ENCODE measurements at regions of chr10 and their contacts with region 1.

Region 1: DNA sequence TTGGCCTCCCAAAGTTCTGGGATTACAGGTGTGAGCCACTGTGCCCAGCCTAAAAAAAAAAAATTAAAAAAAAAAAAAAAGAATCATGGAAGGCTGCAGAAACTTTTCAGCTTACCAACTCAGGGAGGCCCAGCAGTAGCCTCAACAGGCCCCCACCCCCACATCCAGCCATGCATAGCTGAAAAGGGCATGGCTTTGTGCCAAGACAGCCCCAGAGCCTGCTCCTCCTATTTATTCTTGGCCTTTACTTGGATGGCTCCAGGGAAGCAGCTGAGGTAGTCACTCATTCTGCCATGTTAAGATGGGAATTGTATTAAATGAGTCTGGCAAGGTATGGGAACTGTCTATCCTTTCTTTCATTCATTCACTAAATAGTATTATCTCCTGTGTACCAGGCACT is 13.7 kb upstream of the CNNM2 start:
- DNase-seq: peak; percentile 31
- ATAC-seq: peak; percentile 33

Region 2: DNA sequence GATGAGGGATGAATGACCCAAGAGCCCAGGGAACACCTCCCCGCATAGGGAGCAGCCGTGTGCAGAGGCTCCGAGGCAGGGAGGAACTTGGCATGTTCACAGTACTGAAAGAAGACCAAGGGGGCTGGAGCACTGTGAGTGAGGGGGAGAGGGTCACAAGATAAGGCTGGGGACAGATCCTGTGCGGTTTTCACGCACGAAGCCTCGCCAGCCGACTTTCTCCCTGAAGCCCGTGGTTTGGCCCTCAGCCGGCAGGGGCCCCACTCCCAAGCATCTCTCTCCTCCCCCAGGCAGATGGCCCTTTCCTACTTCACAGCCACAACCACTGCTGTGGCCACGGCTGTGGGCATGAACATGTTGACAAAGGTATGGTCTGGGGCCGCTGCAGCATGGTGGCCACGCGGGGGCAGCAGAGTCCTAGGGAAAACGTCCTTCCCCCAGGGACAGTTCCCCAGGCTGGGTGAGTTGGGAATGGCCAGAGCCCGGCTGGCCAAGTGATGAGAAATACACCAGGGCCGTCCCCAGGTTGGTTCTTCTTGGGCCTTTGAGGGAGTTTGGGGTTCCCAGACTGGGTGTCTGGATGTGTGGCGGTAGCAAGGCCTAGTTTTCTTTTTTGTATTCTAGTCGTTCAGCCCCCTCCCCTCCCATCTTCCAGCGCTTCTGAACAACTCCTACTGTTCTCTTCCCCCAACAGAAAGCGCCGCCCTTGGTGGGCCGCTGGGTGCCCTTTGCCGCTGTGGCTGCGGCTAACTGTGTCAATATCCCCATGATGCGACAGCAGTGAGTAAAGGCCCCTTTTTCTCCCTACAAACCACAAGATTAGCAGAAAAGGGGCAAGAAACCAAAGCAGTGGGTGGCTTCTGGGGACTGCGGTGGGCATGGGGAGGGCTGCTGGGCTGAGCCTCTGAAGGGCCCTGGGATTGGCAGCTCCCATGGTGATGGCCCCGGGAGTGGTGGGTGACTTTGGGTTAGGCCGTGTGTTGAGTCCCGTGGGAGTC is 175.0 kb before region 1 on chr10:
- intact Hi-C with region 1: loop called (anchors 5 kb)
- DNase-seq: peak; percentile 93
- ATAC-seq: peak; percentile 95

Region 3: DNA sequence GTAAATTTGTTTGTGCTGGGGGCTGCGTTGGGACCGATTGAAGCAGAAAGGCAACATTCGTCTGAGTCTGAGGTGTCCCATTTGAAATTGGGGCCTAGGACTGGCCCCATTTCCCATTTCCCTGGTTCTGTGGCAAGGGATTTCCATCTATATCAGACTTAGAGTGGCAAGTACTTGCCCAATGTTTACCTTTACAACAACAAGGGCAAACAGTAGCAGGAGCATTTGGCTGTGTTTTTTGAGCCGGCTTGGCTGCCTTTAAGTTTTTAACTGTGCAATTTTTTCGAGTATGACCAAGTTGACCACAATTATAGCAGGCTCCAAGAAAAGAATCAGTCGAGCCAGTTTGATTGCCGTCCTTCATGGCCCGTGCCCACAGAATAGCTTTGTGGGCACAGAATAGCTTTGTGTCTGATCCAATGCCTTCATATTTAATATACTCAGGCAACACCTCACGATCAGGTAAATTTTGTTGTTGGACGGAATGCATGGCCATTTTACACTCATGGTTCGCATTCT is 62.5 kb before region 1 on chr10:
- intact Hi-C with region 1: loop called (anchors 5 kb)
- DNase-seq: no peak
- ATAC-seq: no peak

Region 4: GRCh38 chr10:102988404-102989314 is 84.3 kb after region 1 on chr10:
- intact Hi-C with region 1: no loop called
- DNase-seq: no peak
- ATAC-seq: no peak

Region 5: GRCh38 chr10:103215601-103216000 is 311.3 kb after region 1 on chr10:
- intact Hi-C with region 1: no loop called
- DNase-seq: no peak
- ATAC-seq: no peak